Activated T-helper 1 cell treated with anti-CD3 and anti-CD28 coated beads, Interleukin-12 subunit alpha, Interleukin-12 subunit beta, Interleukin-2, Interleukin-4 antibody, amounts not matched to agents 30 ng/mL and 10 ng/mL and 1 ng/mL, durations not matched to agents 14 hours and 24 hours and 36 hours (primary cell): ENCODE measurements at regions of chr5 and their contacts with region 1.

Region 1: DNA sequence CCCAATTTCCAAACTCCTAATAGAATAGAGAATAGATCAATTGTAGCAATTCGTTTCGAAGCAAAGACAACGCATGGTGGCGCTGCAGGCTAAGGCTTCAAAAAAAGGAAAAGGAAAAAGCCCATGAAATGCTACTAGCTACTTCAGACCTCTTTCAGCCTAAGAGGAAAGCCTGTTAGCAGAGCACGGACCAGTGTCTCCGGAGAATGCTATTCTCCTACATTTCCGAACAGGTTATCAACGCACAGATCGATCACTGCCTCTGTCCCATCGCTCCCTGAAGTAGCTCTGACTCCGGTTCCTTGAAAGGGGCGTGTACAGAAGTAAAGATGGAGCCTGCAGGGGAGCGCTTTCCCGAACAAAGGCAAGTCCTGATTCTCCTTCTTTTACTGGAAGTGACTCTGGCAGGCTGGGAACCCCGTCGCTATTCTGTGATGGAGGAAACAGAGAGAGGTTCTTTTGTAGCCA is at the start of gene PCDHB15:
- DNase-seq: no peak
- H3K4me3 Mint-ChIP-seq: no peak within 1 kb of the TSS
- H3K27ac Mint-ChIP-seq: no peak within 1 kb of the TSS
- H3K4me1 Mint-ChIP-seq: no peaks in the 10 kb centered on the region
- H3K27me3 Mint-ChIP-seq: no peaks in the 10 kb centered on the region
- total RNA-seq, gene PCDHB15: not detected in 2 replicates

Region 2: DNA sequence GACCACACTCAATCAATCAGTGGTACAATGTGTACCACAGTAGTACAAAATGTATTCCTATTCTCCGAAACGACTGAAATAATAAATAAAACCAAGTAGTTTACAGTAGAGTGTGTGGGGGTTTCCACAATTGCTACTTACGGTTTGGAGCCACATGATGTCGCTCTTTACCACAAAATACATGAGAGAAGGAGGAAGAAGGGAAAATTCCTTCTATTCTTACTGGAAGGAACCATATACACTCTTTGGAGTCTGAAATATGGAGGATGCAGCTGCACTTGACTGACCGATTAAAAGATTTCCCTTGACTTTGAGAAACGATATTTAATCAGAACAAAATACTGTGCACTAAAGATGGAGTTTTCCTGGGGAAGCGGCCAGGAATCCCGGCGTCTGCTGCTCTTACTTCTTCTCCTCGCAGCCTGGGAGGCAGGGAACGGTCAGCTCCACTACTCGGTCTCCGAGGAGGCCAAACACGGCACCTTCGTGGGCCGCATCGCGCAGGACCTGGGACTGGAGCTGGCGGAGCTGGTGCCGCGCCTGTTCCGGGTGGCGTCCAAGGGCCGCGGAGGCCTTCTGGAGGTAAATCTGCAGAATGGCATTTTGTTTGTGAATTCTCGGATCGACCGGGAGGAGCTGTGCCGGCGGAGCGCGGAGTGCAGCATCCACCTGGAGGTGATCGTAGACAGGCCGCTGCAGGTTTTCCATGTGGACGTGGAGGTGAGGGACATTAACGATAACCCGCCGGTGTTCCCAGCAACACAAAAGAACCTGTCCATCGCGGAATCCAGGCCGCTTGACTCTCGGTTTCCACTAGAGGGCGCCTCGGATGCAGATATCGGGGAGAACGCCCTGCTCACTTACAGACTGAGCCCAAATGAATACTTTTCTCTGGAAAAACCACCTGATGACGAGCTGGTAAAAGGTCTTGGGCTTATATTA is 438.2 kb before region 1 on chr5 and contains the start of gene PCDHA4:
- intact Hi-C with region 1: no loop called
- DNase-seq: no peak
- H3K4me3 Mint-ChIP-seq: no peak within 1 kb of the TSS
- H3K27ac Mint-ChIP-seq: no peak within 1 kb of the TSS
- H3K4me1 Mint-ChIP-seq: no peaks in the 10 kb centered on the region
- H3K27me3 Mint-ChIP-seq: no peaks in the 10 kb centered on the region
- total RNA-seq, gene PCDHA4: not detected in 2 replicates

Region 3: GRCh38 chr5:141349917-141350619 is 104.8 kb after region 1 on chr5 and contains the start of gene PCDHGB1:
- intact Hi-C with region 1: loop called (anchors 10 kb)
- DNase-seq: peak; percentile 30
- H3K4me3 Mint-ChIP-seq: peak within 1 kb of the TSS; percentile 63
- H3K27ac Mint-ChIP-seq: no peak within 1 kb of the TSS
- H3K4me1 Mint-ChIP-seq: peaks cover 6% of the 10 kb centered on the region
- H3K27me3 Mint-ChIP-seq: peaks cover 9% of the 10 kb centered on the region
- total RNA-seq, gene PCDHGB1: 0.18 and 0.32 TPM in 2 replicates

Region 4: GRCh38 chr5:142685418-142686209 is 1440.3 kb after region 1 on chr5 and contains the start of gene FGF1:
- intact Hi-C with region 1: no loop called
- DNase-seq: no peak
- H3K4me3 Mint-ChIP-seq: no peak within 1 kb of the TSS
- H3K27ac Mint-ChIP-seq: no peak within 1 kb of the TSS
- H3K4me1 Mint-ChIP-seq: no peaks in the 10 kb centered on the region
- H3K27me3 Mint-ChIP-seq: peaks cover 12% of the 10 kb centered on the region
- total RNA-seq, gene FGF1: 0.08 TPM in 1 of 2 replicates, not detected in the other